Heart left ventricle (tissue), 16 donors: ENCODE measurements at regions of chr2 and their contacts with region 1.

Region 1: DNA sequence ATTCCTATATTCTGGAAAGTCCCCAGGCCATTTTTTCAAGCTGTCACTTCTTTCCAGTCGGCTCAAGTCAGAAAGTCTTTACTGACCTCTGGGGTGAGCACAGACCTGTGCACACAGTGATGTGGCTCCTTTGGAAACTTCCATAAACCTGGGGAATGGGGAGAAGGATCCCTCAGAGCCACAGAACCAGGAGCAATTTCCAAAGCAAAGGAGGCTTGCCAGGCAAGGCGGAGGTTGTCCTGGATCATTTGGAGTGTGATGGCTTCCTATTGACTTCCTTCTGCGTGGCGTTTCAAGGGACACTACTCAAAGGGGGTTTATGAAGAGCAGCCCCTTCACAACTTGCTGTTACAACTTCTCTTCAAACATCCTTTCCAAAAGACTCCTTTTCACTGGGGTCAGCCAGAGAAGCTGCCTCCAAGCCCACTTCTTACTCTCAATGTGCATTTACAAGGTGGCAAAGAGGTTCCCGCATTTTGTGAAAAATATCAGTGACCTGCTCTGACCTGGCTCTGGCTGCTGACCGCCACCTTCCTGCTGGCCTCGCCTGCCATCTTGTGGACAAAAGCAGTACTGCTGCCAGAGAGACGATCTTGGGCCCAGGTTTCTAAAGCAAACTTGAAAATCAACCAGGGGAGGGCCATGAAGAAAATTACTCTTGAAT is 18.2 kb upstream of the TMEM247 start:
- DNase-seq: peak; percentile 69 to 87 (median 78)
- ATAC-seq: peak; percentile 34 to 75 (median 58)
- H3K4me3 ChIP-seq: no peak overlapping the region
- H3K27ac ChIP-seq: peak overlapping the region; percentile 30 to 74 (median 58)
- H3K4me1 ChIP-seq: peaks cover 7 to 40% (median 20%) of the 10 kb centered on the region in 12 donors
- H3K27me3 ChIP-seq: no peaks in the 10 kb centered on the region
- CTCF ChIP-seq: peak; percentile 98 to 100 (median 99)
- POLR2A ChIP-seq: no peak

Region 2: DNA sequence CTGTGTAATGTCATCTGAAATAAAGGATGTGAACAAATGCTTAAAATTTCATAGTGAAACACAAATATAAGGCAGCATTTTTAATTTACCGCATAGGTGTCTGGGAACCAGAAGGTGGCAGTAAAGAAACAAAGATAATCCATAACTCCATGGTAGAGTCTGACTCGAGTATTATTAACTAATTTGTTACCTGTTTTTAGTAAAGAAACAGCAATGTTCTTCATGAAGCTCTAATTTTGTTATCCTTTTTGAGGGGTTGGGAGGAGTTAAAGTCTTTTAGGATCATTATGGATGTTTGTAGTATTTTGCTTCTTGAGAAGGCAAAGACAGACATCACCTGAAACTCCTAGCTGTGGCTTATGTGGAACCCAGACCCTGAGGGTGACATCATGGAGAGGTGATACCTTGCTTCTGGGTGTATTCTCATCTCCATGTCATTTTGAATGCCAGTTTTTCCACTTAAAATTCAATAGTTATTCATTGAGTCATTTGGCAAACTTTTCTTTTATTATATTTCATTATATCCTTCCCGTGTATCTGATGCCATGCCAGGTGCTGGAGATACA is 450.1 kb before region 1 on chr2:
- intact Hi-C with region 1: loop called in 4 of 10 experiments (anchors 1 to 2 kb)
- DNase-seq: no peak
- ATAC-seq: peak in 3 of 4 donors; percentile 50 to 68 (median 54)
- H3K4me3 ChIP-seq: no peak overlapping the region
- H3K27ac ChIP-seq: no peak overlapping the region
- H3K4me1 ChIP-seq: peaks cover 0 to 27% (median 12%) of the 10 kb centered on the region in 12 donors
- H3K27me3 ChIP-seq: no peaks in the 10 kb centered on the region
- CTCF ChIP-seq: peak; percentile 44 to 81 (median 72)
- POLR2A ChIP-seq: no peak

Region 3: DNA sequence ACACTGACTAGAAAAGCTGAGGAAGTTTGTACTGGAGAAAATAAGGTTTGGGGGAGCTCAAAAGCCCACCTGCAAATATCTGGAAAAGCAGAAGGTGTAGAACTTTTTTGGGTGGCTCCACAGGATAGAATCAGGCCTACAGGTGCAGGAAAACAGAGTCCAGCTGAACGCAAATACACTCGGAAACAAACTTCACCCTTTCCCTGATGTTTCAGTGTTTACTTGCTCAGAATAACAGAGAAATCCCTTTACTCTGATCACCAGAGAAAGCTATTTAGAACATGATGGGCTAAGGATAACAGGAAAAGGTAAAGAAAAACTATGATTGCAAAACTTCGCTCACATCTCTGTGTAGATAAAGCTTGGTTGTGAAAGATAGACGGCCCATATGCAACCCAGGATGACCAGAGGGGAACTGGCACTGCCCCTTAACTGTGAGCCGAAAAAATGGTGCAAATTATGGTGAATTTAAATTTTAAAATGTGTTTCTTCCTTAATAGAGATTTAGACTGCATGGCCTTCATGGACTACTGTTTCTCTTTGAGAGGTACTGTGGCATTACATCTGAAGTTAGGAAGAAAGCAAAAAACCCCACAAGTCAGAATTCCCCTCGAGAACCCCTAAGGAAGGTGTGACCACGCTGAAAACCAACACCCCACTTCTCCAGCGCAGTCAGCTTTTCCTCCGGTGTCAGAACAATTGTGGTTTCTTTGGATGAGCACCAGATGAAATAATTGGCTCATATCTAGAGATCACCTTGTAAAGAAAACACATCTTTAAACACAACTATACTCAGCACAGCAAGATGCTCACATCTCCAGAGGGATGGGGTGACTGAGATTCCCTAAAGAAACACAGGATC is 66.3 kb before region 1 on chr2:
- intact Hi-C with region 1: loop called in 2 of 10 experiments (anchors 5 to 10 kb)
- DNase-seq: no peak
- ATAC-seq: no peak
- H3K4me3 ChIP-seq: no peak overlapping the region
- H3K27ac ChIP-seq: no peak overlapping the region
- H3K4me1 ChIP-seq: peaks cover 0 to 4% (median 0%) of the 10 kb centered on the region in 12 donors
- H3K27me3 ChIP-seq: no peaks in the 10 kb centered on the region
- CTCF ChIP-seq: no peak
- POLR2A ChIP-seq: no peak